Aorta (tissue), 5 donors: ENCODE measurements at regions of chr15 and their contacts with region 1.

Region 1: DNA sequence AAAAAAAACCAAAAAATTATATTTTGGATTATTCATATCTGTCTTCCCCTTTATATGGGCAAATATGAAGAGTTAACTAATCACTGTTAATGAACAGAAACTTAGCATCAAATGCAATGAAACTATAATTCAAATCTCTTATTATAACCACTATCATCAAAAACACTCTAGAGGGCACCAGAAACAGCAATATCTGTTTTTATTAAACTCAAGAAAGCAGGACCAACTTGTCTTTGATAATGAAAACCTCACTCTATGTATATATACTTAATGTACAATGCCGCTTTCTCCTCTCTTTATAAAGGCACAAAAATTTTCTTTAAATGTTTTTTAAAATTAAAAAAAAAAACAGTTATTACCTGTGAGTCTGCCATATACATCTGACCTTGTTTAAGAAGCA is 92.7 kb downstream of the UACA start:
- DNase-seq: no peak
- ATAC-seq: no peak
- H3K4me3 ChIP-seq: no peak overlapping the region
- H3K27ac ChIP-seq: no peak overlapping the region
- H3K4me1 ChIP-seq: peaks cover 0 to 6% of the 10 kb centered on the region in 2 donors
- H3K27me3 ChIP-seq: no peaks in the 10 kb centered on the region

Region 2: GRCh38 chr15:70156671-70157271 is 513.9 kb before region 1 on chr15:
- intact Hi-C with region 1: no loop called
- DNase-seq: peak; percentile 83 to 91
- ATAC-seq: peak; percentile 77
- H3K4me3 ChIP-seq: no peak overlapping the region
- H3K27ac ChIP-seq: no peak overlapping the region
- H3K4me1 ChIP-seq: no peaks in the 10 kb centered on the region
- H3K27me3 ChIP-seq: no peaks in the 10 kb centered on the region

Region 3: DNA sequence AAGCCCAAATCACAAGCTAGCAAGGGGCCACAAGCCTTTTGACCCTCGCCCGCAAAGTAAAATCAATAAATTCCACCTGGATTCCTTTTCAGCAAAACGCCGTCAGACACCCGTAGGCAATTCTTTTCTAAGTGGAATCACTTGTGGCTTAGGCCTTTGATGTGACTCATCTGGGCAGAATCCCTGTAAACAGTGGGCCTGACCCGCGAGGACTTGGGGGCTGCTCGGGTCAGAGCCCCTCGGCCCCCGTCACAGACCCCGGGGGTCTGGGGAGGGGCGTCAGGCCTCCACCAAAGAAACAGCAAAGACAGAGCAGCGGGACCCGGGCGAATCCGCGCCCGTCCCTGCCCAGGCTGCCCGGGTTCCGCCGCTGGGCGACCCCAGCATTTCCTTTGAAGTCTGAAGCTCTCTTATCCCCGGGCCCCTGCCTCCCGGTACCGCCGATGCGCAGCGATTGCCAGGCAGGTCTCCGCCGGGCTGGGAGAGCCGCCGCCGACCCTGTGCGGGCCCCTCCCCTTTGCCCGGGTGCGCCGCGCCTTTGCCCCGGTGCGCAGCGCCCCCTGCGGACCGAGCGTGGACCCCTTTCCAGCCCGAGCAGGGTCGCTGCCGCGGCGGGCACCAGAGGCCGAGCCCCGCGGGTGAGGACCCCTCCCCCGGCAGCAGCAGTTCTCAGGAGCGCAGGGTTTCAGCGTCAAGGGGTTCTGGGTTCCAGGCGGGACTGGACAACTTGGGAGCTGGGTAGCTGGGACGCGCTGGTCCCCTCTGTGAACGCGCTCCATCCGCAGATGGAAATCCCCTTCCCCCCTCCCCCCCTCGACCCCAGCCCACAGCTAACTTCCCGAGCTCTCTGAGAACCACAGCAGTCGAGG is 85.6 kb before region 1 on chr15:
- intact Hi-C with region 1: no loop called
- DNase-seq: peak in 1 of 2 donors; percentile 72
- ATAC-seq: peak; percentile 22
- H3K4me3 ChIP-seq: no peak overlapping the region
- H3K27ac ChIP-seq: no peak overlapping the region
- H3K4me1 ChIP-seq: no peaks in the 10 kb centered on the region
- H3K27me3 ChIP-seq: no peaks in the 10 kb centered on the region

Region 4: GRCh38 chr15:70617076-70617910 is 53.4 kb before region 1 on chr15:
- intact Hi-C with region 1: no loop called
- DNase-seq: no peak
- ATAC-seq: no peak
- H3K4me3 ChIP-seq: no peak overlapping the region
- H3K27ac ChIP-seq: no peak overlapping the region
- H3K4me1 ChIP-seq: peaks cover 0 to 4% of the 10 kb centered on the region in 2 donors
- H3K27me3 ChIP-seq: no peaks in the 10 kb centered on the region

Region 5: DNA sequence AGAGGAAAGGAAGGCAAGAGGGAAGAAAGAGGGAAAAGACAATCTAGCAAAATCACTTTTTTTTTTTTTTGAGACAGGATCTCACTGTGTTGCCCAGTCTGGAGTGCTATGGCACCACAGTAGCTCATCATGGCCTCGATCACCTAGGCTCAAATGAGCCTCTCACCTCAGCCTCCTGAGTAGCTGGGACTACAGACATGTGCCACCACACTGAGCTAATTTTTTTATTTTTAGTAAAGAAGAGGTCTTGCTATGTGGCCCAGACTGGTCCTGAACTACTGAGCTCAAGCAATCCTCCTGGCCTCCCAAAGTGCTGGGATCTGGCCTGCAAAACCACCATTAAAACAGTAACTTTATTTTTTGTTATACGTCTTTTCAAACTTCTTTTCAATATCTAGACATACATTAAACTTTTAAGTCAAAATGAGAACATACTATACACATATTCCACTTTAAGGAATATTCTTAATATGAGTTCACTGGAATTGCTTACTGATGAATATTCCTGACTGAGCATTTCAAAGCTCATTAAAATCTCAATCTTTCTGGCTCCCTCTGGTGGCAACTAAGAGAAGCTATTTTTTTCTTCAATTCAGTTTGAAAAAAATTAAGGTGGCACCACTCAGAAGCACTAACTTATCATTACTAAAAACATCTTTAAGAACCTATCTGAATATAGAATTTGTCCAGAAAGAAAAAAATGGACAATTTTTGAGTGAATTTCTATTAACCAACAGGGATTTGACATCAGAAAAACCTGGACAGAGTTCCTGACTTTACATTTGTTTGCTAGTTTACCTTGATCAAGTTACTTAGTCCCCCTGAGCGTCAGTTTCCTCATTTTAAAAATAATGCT is 51.8 kb after region 1 on chr15:
- intact Hi-C with region 1: loop called (anchors 10 kb)
- DNase-seq: no peak
- ATAC-seq: peak; percentile 60
- H3K4me3 ChIP-seq: no peak overlapping the region
- H3K27ac ChIP-seq: no peak overlapping the region
- H3K4me1 ChIP-seq: peaks cover under 1 to 3% of the 10 kb centered on the region in 2 donors
- H3K27me3 ChIP-seq: no peaks in the 10 kb centered on the region

Region 6: GRCh38 chr15:70875001-70875782 is 204.5 kb after region 1 on chr15:
- intact Hi-C with region 1: loop called in 1 of 2 experiments (anchors 10 kb)
- DNase-seq: no peak
- ATAC-seq: no peak
- H3K4me3 ChIP-seq: no peak overlapping the region
- H3K27ac ChIP-seq: no peak overlapping the region
- H3K4me1 ChIP-seq: no peaks in the 10 kb centered on the region
- H3K27me3 ChIP-seq: peaks cover 0 to 2% of the 10 kb centered on the region in 2 donors

Region 7: GRCh38 chr15:71003319-71003718 is 332.6 kb after region 1 on chr15:
- intact Hi-C with region 1: no loop called
- DNase-seq: no peak
- ATAC-seq: no peak
- H3K4me3 ChIP-seq: no peak overlapping the region
- H3K27ac ChIP-seq: no peak overlapping the region
- H3K4me1 ChIP-seq: no peaks in the 10 kb centered on the region
- H3K27me3 ChIP-seq: no peaks in the 10 kb centered on the region